ENCODE measurements at regions of chr11 and their contacts with region 1.

Region 1: DNA sequence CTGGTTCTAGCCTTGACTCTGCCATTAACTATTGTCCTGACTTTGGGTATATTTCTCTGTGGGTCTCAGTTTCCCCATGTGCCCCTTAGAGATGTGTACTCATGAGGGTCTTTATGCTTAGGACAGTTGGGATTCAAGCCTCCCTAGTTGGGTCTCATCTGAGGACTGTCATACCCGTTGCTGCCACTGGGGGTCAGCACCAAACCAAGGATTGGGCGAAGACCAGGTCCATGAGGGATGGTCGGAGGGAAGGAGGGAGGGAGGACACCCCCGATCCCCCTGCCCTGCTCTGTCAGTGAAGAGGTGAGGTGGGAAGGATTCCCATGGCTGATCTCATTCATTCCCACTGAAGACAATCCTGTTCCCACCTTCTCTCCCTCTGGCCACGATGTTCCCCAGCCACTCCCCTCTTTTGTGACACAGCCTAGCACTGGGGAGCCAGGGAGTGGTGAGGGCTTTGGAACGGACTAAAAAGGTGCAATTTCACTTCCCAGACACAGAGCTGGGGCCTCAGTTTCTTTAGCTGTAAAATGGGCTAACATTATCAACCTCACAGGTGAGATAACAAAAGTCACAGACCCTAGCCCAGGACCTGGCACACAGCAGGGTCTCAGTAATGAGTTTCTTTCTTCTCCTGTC is 12.4 kb upstream of the KLHL35 start:
- DNase-seq: peak; percentile 74
- H3K4me3 Mint-ChIP-seq: no peak overlapping the region
- H3K27ac Mint-ChIP-seq: no peak overlapping the region
- H3K4me1 Mint-ChIP-seq: no peaks in the 10 kb centered on the region
- H3K27me3 Mint-ChIP-seq: no peaks in the 10 kb centered on the region

Region 2: GRCh38 chr11:75399344-75400145 is 45.9 kb before region 1 on chr11 and contains the start of gene RPS3:
- CTCF ChIA-PET with region 1: no interaction called
- POLR2A ChIA-PET with region 1: no interaction called
- DNase-seq: peak; percentile 90
- H3K4me3 Mint-ChIP-seq: peak within 1 kb of the TSS; percentile 97
- H3K27ac Mint-ChIP-seq: peak within 1 kb of the TSS; percentile 99
- H3K4me1 Mint-ChIP-seq: peaks cover 46% of the 10 kb centered on the region
- H3K27me3 Mint-ChIP-seq: peaks cover 7% of the 10 kb centered on the region
- total RNA-seq, gene RPS3: 2,943 to 3,099 TPM

Region 3: GRCh38 chr11:75432911-75433321 is 12.5 kb before region 1 on chr11 and contains the start of gene KLHL35:
- CTCF ChIA-PET with region 1: interaction called, 15 read pairs
- POLR2A ChIA-PET with region 1: no interaction called
- DNase-seq: no peak
- H3K4me3 Mint-ChIP-seq: no peak within 1 kb of the TSS
- H3K27ac Mint-ChIP-seq: no peak within 1 kb of the TSS
- H3K4me1 Mint-ChIP-seq: peaks cover 24% of the 10 kb centered on the region
- H3K27me3 Mint-ChIP-seq: peaks cover 46% of the 10 kb centered on the region
- total RNA-seq, gene KLHL35: 0.50 to 1.3 TPM

Region 4: DNA sequence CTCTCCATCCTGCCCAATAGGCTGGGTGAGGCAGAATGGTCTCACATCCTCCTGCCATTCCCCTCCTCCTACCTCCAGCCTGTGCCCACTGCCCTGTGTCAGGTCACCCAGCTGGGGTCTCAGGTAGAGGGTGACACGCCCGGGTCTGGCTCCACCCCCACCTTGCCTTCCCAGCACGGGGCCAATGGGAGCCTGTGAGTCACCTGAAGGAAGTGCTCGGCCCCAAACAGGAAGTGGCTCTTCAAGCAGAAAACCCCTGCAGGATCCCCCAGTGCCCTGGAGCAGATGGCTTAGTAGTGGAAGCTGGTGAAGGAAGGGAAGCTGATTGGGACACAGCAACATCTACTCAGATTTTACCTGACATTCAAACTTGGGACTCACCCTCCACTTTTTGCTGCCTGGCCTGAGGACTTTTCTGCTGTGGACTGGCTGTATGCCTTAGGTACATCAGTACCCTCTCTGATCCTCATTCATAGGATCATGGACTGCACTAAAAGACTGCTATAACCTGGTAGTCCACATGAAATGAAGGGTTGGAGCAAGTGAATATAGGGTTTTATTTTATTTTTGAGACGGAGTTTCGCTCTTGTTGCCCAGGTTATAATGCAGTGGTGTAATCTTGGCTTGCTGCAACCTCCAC is 46.9 kb after region 1 on chr11:
- CTCF ChIA-PET with region 1: no interaction called
- POLR2A ChIA-PET with region 1: no interaction called
- DNase-seq: peak; percentile 54
- H3K4me3 Mint-ChIP-seq: no peak overlapping the region
- H3K27ac Mint-ChIP-seq: peak overlapping the region; percentile 63
- H3K4me1 Mint-ChIP-seq: peaks cover 24% of the 10 kb centered on the region
- H3K27me3 Mint-ChIP-seq: no peaks in the 10 kb centered on the region

Region 5: GRCh38 chr11:75532200-75533048 is 87.0 kb after region 1 on chr11:
- CTCF ChIA-PET with region 1: interaction called, 12 read pairs
- POLR2A ChIA-PET with region 1: no interaction called
- DNase-seq: peak; percentile 89
- H3K4me3 Mint-ChIP-seq: peak overlapping the region; percentile 10
- H3K27ac Mint-ChIP-seq: peak overlapping the region; percentile 79
- H3K4me1 Mint-ChIP-seq: peaks cover 61% of the 10 kb centered on the region
- H3K27me3 Mint-ChIP-seq: no peaks in the 10 kb centered on the region

Measured in activated CD4-positive, alpha-beta T cell treated with anti-CD3 and anti-CD28 coated beads, Interleukin-2, amount 10 ng/mL, durations not matched to agents 7 days and 5 days (primary cell).